B cell (primary cell): ENCODE measurements at regions of chr19 and their contacts with region 1.

Region 1: DNA sequence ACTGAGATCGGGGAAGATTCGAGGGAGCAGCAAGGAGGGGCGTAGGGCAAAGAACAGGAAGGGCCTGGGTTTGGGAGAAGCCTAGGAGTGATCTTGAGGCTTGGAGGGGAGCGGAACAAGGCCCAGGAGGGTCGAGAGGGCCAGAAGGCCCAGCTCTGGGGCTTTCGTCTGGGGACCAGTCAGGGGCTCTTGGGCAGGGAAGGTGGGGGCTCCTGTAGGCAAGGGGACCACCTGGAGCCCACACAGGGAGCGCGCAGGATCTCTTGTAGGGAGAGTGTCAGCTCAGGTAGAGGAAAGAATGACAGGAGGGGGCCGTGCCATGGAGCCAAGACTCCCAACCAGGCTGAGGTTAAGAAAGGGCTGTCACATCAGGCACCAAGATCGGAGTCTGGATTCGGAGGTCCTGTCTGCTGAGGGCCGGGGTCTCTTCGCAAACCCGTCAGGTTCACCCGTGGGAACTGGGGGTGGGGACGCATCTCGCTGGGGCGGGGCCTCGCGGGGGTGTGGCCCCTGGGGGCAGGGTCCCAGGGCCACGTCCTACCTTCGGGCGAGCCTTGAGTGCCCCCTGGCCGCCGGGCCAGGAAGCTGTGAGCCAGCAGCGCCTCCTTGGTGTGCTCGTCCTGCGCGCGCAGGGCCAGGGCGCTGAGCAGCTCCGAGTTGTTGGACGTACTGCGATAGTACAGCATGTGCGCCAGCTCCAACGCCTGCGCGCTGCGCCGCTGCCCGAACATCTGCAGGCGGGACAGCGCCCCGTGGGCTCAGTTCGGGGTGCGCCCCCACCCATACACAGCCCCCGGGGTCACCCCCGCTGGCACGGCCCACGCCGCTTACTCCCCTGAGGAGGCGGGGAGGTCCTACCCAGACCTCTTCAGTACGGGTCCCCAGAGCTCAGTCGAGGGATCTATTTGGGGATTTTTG is 8.4 kb downstream of the EMP3 start:
- DNase-seq: peak; percentile 94
- ATAC-seq: peak; percentile 62
- H3K4me3 ChIP-seq: peak overlapping the region; percentile 59 to 94 (median 90)
- H3K4me3 Mint-ChIP-seq: peak overlapping the region; percentile 98
- H3K27ac ChIP-seq: peak overlapping the region; percentile 82 to 94
- H3K27ac Mint-ChIP-seq: peak overlapping the region; percentile 95
- H3K4me1 ChIP-seq: peaks cover 42 to 54% of the 10 kb centered on the region in 2 donors
- H3K4me1 Mint-ChIP-seq: peaks cover 49% of the 10 kb centered on the region
- H3K27me3 ChIP-seq: no peaks in the 10 kb centered on the region
- H3K27me3 Mint-ChIP-seq: no peaks in the 10 kb centered on the region
- CTCF ChIP-seq: peak; percentile 83

Region 2: GRCh38 chr19:48090281-48090802 is 243.4 kb before region 1 on chr19:
- CTCF ChIA-PET with region 1: no interaction called
- POLR2A ChIA-PET with region 1: no interaction called
- intact Hi-C with region 1: no loop called
- DNase-seq: no peak
- ATAC-seq: no peak
- H3K4me3 ChIP-seq: no peak overlapping the region
- H3K4me3 Mint-ChIP-seq: no peak overlapping the region
- H3K27ac ChIP-seq: no peak overlapping the region
- H3K27ac Mint-ChIP-seq: no peak overlapping the region
- H3K4me1 ChIP-seq: no peaks in the 10 kb centered on the region
- H3K4me1 Mint-ChIP-seq: peaks cover 2% of the 10 kb centered on the region
- H3K27me3 ChIP-seq: no peaks in the 10 kb centered on the region
- H3K27me3 Mint-ChIP-seq: peaks cover 4% of the 10 kb centered on the region
- CTCF ChIP-seq: no peak

Region 3: GRCh38 chr19:48170038-48170812 is 163.5 kb before region 1 on chr19 and contains the starts of genes LIG1 and ZSWIM9:
- CTCF ChIA-PET with region 1: no interaction called
- POLR2A ChIA-PET with region 1: no interaction called
- intact Hi-C with region 1: loop called (anchors 5 kb)
- DNase-seq: peak; percentile 97
- ATAC-seq: peak; percentile 80
- H3K4me3 ChIP-seq: peak within 1 kb of the TSS; percentile 41 to 99 (median 90)
- H3K4me3 Mint-ChIP-seq: peak within 1 kb of the TSS; percentile 96
- H3K27ac ChIP-seq: peak within 1 kb of the TSS; percentile 86 to 87
- H3K27ac Mint-ChIP-seq: peak within 1 kb of the TSS; percentile 98
- H3K4me1 ChIP-seq: peaks cover 10 to 15% of the 10 kb centered on the region in 2 donors
- H3K4me1 Mint-ChIP-seq: peaks cover 25% of the 10 kb centered on the region
- H3K27me3 ChIP-seq: no peaks in the 10 kb centered on the region
- H3K27me3 Mint-ChIP-seq: no peaks in the 10 kb centered on the region
- CTCF ChIP-seq: no peak
- total RNA-seq, gene LIG1: 111 and 116 TPM in 2 replicates
- total RNA-seq, gene ZSWIM9: 11.8 and 15.7 TPM in 2 replicates

Region 4: DNA sequence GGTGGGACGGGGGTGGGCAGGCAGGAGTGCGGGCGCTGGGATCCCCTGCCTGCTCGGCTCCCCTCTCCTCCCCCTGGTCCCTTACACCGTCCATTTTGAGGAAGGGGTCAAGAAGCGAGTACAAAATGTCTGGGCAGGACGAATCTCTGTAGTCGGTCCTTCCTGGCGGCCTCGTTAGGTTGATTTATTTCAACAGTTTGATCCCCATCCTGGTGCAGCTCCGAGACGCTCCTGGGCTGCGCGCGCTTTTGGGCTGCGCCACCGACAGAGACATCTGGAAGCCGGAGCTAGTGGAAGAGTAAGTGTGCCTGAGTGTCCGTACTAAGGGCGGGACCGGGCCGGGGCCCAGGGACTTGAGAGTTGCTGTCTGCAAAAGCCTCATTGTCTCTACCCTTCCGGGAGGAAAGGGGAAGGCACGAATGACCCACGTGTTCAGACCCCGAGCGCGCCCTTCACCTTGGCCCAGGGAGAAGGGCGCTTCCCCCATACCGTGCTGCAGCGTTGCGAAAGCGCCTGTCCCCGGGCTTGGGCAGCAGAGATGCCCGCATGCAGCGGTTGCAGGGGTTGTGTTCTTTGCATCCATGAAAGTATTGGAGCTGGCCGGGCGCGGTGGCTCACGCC is 62.1 kb before region 1 on chr19:
- CTCF ChIA-PET with region 1: interaction called, 58 read pairs
- POLR2A ChIA-PET with region 1: interaction called, 4 read pairs
- intact Hi-C with region 1: loop called (anchors 1 kb)
- DNase-seq: peak; percentile 53
- ATAC-seq: peak; percentile 55
- H3K4me3 ChIP-seq: peak overlapping the region; percentile 55 to 82 (median 74)
- H3K4me3 Mint-ChIP-seq: peak overlapping the region; percentile 97
- H3K27ac ChIP-seq: no peak overlapping the region
- H3K27ac Mint-ChIP-seq: peak overlapping the region; percentile 87
- H3K4me1 ChIP-seq: peaks cover 3 to 15% of the 10 kb centered on the region in 2 donors
- H3K4me1 Mint-ChIP-seq: peaks cover 13% of the 10 kb centered on the region
- H3K27me3 ChIP-seq: peaks cover 0 to 2% (median 0%) of the 10 kb centered on the region in 4 experiments
- H3K27me3 Mint-ChIP-seq: peaks cover 3% of the 10 kb centered on the region
- CTCF ChIP-seq: no peak

Region 5: DNA sequence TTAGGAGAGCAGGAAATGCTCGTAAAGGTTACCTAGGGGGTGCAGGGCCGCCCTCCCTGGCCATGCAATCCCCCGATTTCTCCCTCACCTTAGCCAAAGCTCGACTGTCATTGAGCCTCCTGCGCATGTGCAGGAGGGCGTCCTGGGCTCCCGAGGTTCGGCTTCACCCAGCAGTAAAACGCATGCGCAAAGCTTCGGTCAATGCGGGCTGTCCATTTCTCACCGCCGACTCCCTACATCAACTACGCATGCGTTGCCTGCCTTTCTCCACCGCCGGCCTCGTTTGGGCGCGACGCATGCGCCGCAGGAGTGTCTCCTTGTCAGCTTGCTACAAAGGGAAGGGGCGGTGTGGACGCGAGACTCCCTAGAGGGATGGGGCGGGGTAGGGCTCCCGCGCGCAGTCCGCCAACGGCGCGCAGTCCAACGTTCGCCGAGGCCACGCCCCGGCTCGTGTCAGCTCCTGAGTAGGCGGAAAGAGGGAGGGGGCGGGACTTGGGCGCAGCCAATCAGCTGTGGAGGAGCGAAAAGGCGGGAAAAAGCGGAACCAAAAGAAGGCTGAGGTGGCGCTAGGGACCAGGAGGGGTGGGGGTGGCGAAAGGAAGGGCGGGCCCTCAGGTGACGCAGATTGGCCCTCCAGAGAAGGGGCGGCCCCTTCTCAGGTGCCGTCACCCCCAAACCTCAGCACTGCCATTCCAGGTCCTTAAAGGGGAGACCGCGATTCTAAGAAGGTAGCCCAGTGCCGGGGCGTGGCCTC is 30.3 kb after region 1 on chr19 and contains the starts of genes SYNGR4 and TMEM143:
- CTCF ChIA-PET with region 1: interaction called, 15 read pairs
- POLR2A ChIA-PET with region 1: interaction called, 6 read pairs
- intact Hi-C with region 1: loop called (anchors 1 kb)
- DNase-seq: peak; percentile 100
- ATAC-seq: peak; percentile 89
- H3K4me3 ChIP-seq: peak within 1 kb of the TSS; percentile 76 to 91 (median 85)
- H3K4me3 Mint-ChIP-seq: peak within 1 kb of the TSS; percentile 95
- H3K27ac ChIP-seq: peak within 1 kb of the TSS; percentile 93 to 97
- H3K27ac Mint-ChIP-seq: peak within 1 kb of the TSS; percentile 97
- H3K4me1 ChIP-seq: peaks cover 5 to 20% of the 10 kb centered on the region in 2 donors
- H3K4me1 Mint-ChIP-seq: peaks cover 15% of the 10 kb centered on the region
- H3K27me3 ChIP-seq: no peaks in the 10 kb centered on the region
- H3K27me3 Mint-ChIP-seq: no peaks in the 10 kb centered on the region
- CTCF ChIP-seq: no peak
- total RNA-seq, gene SYNGR4: not detected in 2 replicates
- total RNA-seq, gene TMEM143: 30.0 and 34.5 TPM in 2 replicates

Region 6: DNA sequence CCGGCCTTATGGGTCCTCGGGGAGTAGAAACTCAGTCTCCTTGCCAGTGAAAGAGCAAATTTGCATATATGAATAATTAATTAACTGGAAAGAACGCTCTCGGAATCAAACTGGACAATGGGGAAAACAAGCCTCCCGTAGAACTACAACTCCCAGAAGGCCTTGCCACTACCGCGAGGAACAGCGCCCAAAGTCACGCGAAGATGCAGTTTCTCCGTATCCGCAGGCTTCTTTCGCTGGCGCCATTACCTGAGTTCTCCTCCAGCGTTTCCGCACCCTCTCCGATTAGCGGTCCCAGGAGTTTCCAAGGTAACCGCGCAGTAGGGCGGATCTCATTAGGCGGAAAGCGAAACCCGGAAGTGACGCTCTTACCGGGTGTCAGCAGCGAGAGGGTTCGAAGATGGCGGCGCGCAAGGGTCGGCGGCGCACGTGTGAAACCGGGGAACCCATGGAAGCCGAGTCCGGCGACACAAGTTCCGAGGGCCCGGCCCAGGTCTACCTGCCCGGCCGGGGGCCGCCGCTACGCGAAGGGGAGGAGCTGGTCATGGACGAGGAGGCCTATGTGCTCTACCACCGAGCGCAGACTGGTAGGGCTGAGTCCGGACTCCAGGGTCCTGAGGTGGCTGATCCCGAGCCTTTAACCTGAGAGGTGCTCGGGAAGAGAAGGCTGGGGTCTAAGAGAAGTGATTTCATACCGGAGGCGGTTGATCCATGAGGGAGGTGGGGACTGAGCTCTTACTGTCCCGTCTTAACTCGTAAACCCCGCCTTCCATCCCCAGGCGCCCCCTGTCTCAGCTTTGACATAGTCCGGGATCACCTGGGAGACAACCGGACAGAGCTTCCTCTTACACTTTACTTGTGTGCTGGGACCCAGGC is 112.1 kb after region 1 on chr19 and contains the start of gene GRWD1:
- CTCF ChIA-PET with region 1: no interaction called
- POLR2A ChIA-PET with region 1: no interaction called
- intact Hi-C with region 1: loop called (anchors 1 kb)
- DNase-seq: peak; percentile 96
- ATAC-seq: peak; percentile 87
- H3K4me3 ChIP-seq: peak within 1 kb of the TSS; percentile 64 to 99 (median 94)
- H3K4me3 Mint-ChIP-seq: peak within 1 kb of the TSS; percentile 97
- H3K27ac ChIP-seq: peak within 1 kb of the TSS; percentile 88 to 91
- H3K27ac Mint-ChIP-seq: peak within 1 kb of the TSS; percentile 98
- H3K4me1 ChIP-seq: peaks cover 22 to 27% of the 10 kb centered on the region in 2 donors
- H3K4me1 Mint-ChIP-seq: peaks cover 40% of the 10 kb centered on the region
- H3K27me3 ChIP-seq: peaks cover 0 to 24% (median 11%) of the 10 kb centered on the region in 4 experiments
- H3K27me3 Mint-ChIP-seq: peaks cover 22% of the 10 kb centered on the region
- CTCF ChIP-seq: no peak
- total RNA-seq, gene GRWD1: 38.6 and 40.7 TPM in 2 replicates

Region 7: DNA sequence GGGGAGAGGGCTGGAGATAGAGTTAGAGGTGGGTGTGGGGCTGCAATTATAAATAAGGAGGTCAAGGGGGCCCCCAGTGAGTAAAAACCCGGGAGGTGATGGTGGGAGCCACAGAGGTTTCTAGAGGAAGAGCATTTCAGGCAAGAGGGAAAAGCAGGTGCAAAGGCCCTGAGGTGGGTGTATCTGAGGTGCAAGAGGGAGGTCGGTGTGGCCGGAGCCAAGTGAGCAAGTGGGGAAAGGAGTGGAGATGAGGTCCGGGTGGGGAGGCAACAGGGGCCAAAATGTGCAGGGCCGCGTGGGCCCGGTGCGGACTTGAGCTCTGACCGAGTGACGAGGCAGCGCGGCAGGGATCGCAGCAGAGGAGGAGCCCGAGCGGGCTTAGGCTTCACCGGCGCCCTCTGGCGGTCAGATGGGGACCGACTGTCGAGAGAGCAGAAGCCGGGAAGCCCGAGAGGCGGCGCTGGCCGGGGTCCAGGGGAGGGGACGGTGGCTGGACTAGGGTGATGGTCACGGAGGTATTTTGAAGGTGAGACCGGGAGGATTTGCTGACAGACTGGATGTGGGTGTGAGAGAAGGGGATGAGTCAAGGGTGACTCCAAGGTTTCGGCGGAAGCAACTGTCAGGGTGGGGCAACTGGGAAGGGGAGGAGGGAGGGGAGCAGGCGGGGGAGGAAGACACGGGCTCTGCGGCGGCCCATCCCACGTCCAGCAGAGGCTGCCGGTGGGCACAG is 255.1 kb after region 1 on chr19:
- CTCF ChIA-PET with region 1: interaction called, 10 read pairs
- POLR2A ChIA-PET with region 1: interaction called, 3 read pairs
- intact Hi-C with region 1: no loop called
- DNase-seq: peak; percentile 89
- ATAC-seq: peak; percentile 91
- H3K4me3 ChIP-seq: peak overlapping the region in 4 of 5 experiments; percentile 14 to 56 (median 48)
- H3K4me3 Mint-ChIP-seq: peak overlapping the region; percentile 82
- H3K27ac ChIP-seq: no peak overlapping the region
- H3K27ac Mint-ChIP-seq: no peak overlapping the region
- H3K4me1 ChIP-seq: peaks cover 4 to 15% of the 10 kb centered on the region in 2 donors
- H3K4me1 Mint-ChIP-seq: peaks cover 12% of the 10 kb centered on the region
- H3K27me3 ChIP-seq: peaks cover 0 to 7% (median 4%) of the 10 kb centered on the region in 4 experiments
- H3K27me3 Mint-ChIP-seq: peaks cover 14% of the 10 kb centered on the region
- CTCF ChIP-seq: peak; percentile 94

Region 8: DNA sequence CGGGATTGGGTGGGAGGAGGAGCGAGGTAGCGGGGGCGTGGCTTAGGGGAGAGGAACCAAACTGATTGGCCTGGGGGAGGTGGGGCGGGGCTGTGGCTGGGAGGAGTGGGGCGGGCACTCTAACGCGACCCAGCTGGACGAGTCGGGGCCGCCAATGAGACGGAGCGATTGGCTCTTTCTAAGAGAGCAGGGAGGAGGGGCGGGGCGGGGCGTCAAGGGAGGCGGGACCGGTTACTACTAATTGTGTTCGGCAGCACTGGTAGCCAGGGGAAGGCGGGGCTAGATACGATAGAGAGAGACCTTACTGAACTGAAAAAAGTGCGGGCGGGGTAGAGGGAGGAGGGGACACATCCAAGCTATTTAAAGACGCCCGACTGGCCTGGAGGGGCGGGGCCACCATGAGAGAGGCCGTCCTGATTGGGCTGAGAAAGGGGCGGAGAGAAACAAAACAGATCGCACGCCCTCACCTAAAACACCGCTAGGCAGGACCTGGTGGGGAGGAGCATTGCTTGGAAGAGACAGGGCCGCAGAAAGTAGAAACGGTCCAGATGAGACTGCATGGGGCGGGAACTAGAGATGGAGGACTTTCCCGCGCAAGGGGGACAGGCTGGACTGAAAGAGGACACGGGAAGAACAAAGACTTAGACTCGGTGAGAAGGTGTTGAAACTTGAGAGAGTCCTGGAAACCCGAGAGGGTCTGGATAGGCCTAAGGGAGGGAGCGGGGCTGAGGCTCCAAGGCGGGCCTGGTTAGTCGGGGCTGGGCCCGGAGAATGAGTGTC is 1995.6 kb after region 1 on chr19 and contains the start of gene KCNC3:
- CTCF ChIA-PET with region 1: no interaction called
- POLR2A ChIA-PET with region 1: no interaction called
- intact Hi-C with region 1: loop called (anchors 5 kb)
- DNase-seq: peak; percentile 99
- ATAC-seq: peak; percentile 64
- H3K4me3 ChIP-seq: peak within 1 kb of the TSS in 4 of 5 experiments; percentile 41 to 71 (median 56)
- H3K4me3 Mint-ChIP-seq: peak within 1 kb of the TSS; percentile 91
- H3K27ac ChIP-seq: peak within 1 kb of the TSS; percentile 50 to 77
- H3K27ac Mint-ChIP-seq: peak within 1 kb of the TSS; percentile 94
- H3K4me1 ChIP-seq: peaks cover 62 to 80% of the 10 kb centered on the region in 2 donors
- H3K4me1 Mint-ChIP-seq: peaks cover 79% of the 10 kb centered on the region
- H3K27me3 ChIP-seq: peaks cover 0 to 9% (median 2%) of the 10 kb centered on the region in 4 experiments
- H3K27me3 Mint-ChIP-seq: peaks cover 12% of the 10 kb centered on the region
- CTCF ChIP-seq: no peak
- total RNA-seq, gene KCNC3: 23.0 and 24.4 TPM in 2 replicates